ENCODE measurements at regions of chr15 and their contacts with region 1.

Region 1: DNA sequence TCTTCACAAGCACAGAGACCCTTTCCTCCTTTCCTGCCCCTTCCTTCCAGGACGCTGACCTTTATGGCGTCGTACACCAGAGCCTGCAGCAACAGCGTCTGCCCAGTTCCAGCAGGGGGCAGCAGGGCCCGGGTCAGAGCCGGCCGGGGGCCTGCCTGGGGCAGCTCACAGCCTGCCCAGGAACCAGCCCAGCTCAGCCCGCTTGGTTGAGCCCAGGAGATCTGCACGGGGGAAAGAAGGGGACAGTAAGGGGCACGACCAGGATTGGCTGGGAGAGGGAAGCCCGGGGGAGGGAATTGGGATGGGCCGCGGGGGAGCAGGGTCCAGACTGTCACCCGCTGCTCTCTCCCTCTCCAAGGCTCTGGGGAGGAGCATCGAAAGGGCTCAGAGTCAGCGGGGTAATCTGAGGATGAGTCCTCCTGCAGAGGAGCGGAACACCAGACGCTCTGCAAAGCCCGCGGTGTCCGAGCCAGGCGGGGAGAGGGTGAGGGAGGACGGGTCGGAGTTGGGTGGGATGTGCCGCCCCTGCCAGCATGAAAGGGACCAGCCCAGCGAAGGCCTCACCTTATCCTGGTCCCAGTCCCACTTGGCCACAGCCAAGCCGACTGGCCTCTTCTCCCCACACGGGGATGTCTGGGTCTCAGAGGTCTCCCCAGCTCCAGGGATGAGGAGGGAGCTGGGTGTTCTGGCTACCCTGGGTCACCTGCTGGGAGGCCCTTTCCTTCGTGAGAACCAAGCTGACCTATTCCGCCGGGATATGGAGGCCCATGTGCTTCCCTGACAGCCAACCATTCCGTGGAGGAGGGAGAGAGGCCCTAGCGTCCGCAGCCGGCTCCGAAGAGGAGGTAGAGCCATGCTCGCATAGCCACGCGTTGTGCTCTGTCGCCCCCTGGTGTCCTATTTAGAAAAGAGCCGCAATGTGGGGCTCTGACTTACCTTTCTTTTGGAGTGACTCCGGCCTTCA is 7.4 kb upstream of the IGDCC3 start:
- DNase-seq: peak; percentile 89
- H3K4me3 Mint-ChIP-seq: peak overlapping the region; percentile 76
- H3K27ac Mint-ChIP-seq: no peak overlapping the region
- H3K4me1 Mint-ChIP-seq: peaks cover 10% of the 10 kb centered on the region
- H3K27me3 Mint-ChIP-seq: peaks cover 69% of the 10 kb centered on the region

Region 2: DNA sequence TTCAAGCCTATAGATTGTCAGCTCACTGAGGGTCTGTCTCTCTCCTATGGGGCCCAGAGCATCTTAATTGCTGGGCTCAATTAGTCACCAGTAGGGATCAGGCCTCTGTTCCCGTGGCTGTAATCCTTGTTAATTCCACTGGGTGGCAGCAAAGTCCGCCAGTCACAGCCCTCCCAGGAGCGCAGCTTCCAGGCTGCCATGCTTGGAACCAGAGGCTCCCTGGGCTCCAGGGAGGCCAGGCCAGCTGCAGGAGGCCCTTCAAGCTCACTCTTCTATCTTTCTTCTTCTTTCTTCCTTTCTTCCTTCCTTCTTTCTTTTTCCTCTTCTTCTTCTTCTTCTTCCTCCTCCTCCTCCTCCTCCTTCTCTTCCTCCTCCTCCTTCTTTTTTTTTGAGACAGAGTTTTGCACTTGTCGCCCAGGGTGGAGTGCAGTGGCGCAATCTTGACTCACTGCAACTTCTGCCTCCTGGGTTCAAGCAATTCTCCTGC is 66.3 kb before region 1 on chr15:
- CTCF ChIA-PET with region 1: interaction called, 141 read pairs
- DNase-seq: peak; percentile 84
- H3K4me3 Mint-ChIP-seq: no peak overlapping the region
- H3K27ac Mint-ChIP-seq: no peak overlapping the region
- H3K4me1 Mint-ChIP-seq: no peaks in the 10 kb centered on the region
- H3K27me3 Mint-ChIP-seq: peaks cover 34% of the 10 kb centered on the region

Region 3: DNA sequence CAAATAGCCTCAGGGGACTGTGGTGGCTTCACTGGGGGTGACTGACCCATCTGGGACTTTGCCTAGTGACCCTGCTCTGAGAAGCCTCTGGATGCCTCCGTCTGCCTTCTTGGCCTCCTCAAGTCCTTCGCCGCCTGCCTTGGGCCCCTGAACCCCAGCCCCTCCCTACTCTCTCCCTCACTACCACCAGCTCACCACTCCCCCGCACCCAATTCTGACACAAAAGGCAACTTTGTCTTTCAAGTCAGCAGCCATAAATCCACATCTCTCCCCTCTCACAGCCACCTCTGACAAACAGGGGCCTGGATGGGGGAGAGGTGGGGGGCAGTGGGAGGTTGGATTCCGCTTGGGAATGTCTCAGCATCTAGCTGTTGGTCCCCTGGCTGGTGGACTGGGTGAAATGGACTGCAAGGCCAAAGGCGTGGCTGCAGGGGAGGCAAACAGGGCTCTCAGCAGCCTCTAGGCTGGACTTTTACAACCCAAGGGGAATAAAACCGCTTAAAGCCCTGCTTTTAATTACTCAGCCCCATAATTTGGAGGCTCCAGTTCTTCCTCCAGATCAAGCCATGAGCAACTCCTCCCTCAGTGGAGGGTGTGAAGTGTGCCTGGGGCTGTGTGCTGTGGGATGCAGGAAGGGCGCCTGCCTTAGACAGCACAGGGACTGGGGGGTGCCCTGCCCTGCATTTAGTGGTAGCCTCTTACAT is 40.8 kb before region 1 on chr15:
- CTCF ChIA-PET with region 1: no interaction called
- DNase-seq: no peak
- H3K4me3 Mint-ChIP-seq: no peak overlapping the region
- H3K27ac Mint-ChIP-seq: no peak overlapping the region
- H3K4me1 Mint-ChIP-seq: peaks cover 2% of the 10 kb centered on the region
- H3K27me3 Mint-ChIP-seq: peaks cover 36% of the 10 kb centered on the region

Region 4: GRCh38 chr15:65374821-65375401 is 10.3 kb before region 1 on chr15:
- CTCF ChIA-PET with region 1: interaction called, 11 read pairs
- DNase-seq: no peak
- H3K4me3 Mint-ChIP-seq: no peak overlapping the region
- H3K27ac Mint-ChIP-seq: no peak overlapping the region
- H3K4me1 Mint-ChIP-seq: peaks cover 14% of the 10 kb centered on the region
- H3K27me3 Mint-ChIP-seq: peaks cover 90% of the 10 kb centered on the region

Region 5: DNA sequence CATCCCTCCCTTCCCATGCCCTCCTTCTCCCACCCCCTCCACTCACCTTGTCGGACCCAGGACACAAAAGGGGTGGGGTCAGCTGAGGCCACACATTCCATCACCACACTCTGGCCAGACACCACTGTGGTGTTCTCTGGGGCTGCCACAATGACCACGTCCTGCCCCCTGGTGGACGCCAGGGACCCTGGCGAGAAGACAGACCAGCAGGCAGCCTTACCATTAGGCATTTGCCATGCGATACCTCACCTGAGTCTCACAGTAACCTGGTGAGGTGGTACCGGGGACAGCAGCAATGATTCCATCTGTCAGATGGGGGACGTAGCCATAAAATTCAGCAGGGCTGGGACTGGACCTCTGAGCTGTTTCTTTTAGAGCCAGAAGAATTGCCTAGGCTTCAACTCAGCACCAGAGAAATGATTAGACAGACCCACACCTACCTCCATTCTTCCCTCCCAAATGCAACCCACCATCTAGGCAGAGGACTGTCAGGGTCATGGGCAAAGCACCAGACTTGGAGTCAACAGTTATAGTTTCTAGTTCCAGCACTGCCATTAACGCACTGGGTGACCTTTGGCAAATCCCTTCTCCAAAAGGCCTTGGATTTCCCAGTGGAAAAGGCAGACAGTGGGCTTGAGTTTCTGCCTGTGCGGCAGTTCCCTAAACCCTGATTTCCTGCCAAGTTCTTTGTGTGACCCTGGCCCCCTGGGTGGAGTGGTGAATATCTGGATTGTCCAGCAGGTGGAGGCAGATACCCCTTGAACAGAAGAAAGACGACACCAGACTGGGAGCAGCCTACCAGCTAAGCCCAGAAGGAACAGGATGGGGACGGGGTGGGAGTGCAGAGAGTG is 15.8 kb after region 1 on chr15:
- CTCF ChIA-PET with region 1: interaction called, 10 read pairs
- DNase-seq: peak; percentile 65
- H3K4me3 Mint-ChIP-seq: no peak overlapping the region
- H3K27ac Mint-ChIP-seq: no peak overlapping the region
- H3K4me1 Mint-ChIP-seq: peaks cover 6% of the 10 kb centered on the region
- H3K27me3 Mint-ChIP-seq: peaks cover 82% of the 10 kb centered on the region

Region 6: DNA sequence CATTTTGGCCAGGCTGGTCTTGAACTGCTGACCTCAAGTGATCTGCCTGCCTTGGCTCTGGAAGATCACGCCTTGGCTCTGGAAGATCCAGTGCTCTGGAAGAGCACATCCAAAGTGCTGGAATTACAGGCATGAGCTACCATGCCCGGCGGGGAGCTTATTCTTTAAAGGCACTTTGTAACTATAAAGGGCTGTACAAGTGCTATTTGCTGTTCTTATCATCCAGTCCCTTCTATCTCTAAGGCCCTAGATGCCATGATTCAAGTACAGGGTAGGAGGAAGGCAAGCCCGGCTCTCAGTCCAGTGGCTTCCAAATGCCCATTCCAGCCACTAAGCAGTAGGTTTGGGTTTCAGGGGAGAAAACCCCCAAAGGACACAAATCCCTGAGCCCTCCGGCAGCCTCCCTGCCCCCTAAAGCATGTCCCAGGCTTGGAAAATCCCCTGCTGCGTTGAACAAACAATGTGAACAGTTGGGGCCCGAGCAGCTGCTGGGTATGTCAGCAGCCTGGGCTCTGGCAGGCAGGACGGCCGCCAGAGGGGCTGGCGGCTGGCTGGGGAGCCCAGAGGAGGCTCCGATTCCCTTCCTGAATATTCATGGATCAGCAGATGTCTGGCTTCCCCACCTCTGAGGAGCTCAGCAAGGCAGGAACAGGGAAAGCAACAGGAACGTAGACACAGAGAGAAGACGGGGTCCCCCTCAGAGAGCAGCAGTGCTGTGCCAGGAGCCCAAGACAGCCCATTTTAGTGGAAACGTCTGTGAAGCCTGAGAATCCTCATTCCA is 29.9 kb after region 1 on chr15:
- CTCF ChIA-PET with region 1: no interaction called
- DNase-seq: no peak
- H3K4me3 Mint-ChIP-seq: no peak overlapping the region
- H3K27ac Mint-ChIP-seq: no peak overlapping the region
- H3K4me1 Mint-ChIP-seq: no peaks in the 10 kb centered on the region
- H3K27me3 Mint-ChIP-seq: peaks cover 66% of the 10 kb centered on the region